AG04449 (cell line): ENCODE measurements at regions of chr2 and their contacts with region 1.

Region 1: GRCh38 chr2:38315707-38316333 is 61.3 kb downstream of the ATL2 start:
- DNase-seq: peak; percentile 1
- H3K4me3 ChIP-seq: no peak overlapping the region
- CTCF ChIP-seq: peak; percentile 55

Region 2: GRCh38 chr2:38296197-38296780 is 19.5 kb before region 1 on chr2:
- CTCF ChIA-PET with region 1: interaction called, 16 read pairs
- POLR2A ChIA-PET with region 1: no interaction called
- DNase-seq: no peak
- H3K4me3 ChIP-seq: no peak overlapping the region
- CTCF ChIP-seq: no peak

Region 3: GRCh38 chr2:38377050-38377828 is 61.4 kb after region 1 on chr2 and contains the start of gene ATL2:
- CTCF ChIA-PET with region 1: interaction called, 16 read pairs
- POLR2A ChIA-PET with region 1: no interaction called
- DNase-seq: peak; percentile 53
- H3K4me3 ChIP-seq: peak within 1 kb of the TSS; percentile 86
- CTCF ChIP-seq: peak; percentile 0

Region 4: GRCh38 chr2:38465789-38466127 is 149.9 kb after region 1 on chr2:
- CTCF ChIA-PET with region 1: interaction called, 20 read pairs
- POLR2A ChIA-PET with region 1: no interaction called
- DNase-seq: no peak
- H3K4me3 ChIP-seq: no peak overlapping the region
- CTCF ChIP-seq: peak; percentile 48

Region 5: GRCh38 chr2:38535744-38536506 is 220.1 kb after region 1 on chr2:
- CTCF ChIA-PET with region 1: interaction called, 20 read pairs
- POLR2A ChIA-PET with region 1: no interaction called
- DNase-seq: no peak
- H3K4me3 ChIP-seq: peak overlapping the region; percentile 66
- CTCF ChIP-seq: peak; percentile 94

Region 6: GRCh38 chr2:38740851-38741731 is 425.3 kb after region 1 on chr2:
- CTCF ChIA-PET with region 1: interaction called, 35 read pairs
- POLR2A ChIA-PET with region 1: no interaction called
- DNase-seq: no peak
- H3K4me3 ChIP-seq: no peak overlapping the region
- CTCF ChIP-seq: no peak